PC-9 (cell line): ENCODE measurements at regions of chr1 and their contacts with region 1.

Region 1: DNA sequence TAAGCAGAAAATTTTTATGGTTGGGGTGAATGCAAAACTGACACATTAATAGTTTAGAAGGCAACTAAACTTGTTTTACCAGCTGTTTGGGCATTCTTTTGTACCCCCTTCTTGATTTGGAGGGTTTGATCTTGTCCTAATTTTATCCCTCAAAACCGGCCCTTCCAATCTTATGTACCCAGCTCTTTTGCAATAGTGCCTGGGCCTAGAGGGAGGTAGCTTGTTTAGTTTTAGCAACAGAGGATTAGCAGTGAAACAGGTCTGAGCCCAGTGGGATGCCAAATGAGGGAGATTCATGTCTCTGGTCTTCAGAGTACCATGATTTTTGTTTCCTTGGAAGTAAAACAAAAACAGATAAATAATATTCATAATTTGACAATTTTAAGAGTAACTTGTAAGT is 45.1 kb downstream of the CRP start:
- DNase-seq: no peak
- H3K4me3 ChIP-seq: no peak overlapping the region
- H3K27ac ChIP-seq: no peak overlapping the region
- H3K4me1 ChIP-seq: no peaks in the 10 kb centered on the region
- H3K27me3 ChIP-seq: no peaks in the 10 kb centered on the region
- CTCF ChIP-seq: no peak

Region 2: DNA sequence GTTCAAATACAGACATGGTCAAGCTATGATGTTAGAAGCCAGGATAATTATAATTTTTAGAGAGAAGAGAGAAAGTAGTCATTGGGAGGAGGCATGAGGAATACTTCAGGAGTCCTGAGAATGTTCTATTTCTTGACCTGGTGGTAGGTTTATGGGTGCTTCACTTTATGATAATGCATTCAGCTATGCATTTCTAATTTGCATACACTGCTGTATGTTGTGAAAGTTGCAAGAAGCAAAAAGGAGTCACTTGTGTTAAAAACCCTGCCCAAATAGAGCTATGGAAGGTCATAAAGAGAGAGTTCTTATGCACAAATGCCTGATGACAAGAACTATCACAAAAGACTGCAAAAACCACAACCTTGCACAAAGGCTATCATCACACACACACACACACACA is 36.4 kb before region 1 on chr1:
- CTCF ChIA-PET with region 1: no interaction called
- POLR2A ChIA-PET with region 1: no interaction called
- intact Hi-C with region 1: no loop called
- DNase-seq: no peak
- H3K4me3 ChIP-seq: no peak overlapping the region
- H3K27ac ChIP-seq: no peak overlapping the region
- H3K4me1 ChIP-seq: no peaks in the 10 kb centered on the region
- H3K27me3 ChIP-seq: no peaks in the 10 kb centered on the region
- CTCF ChIP-seq: no peak

Region 3: DNA sequence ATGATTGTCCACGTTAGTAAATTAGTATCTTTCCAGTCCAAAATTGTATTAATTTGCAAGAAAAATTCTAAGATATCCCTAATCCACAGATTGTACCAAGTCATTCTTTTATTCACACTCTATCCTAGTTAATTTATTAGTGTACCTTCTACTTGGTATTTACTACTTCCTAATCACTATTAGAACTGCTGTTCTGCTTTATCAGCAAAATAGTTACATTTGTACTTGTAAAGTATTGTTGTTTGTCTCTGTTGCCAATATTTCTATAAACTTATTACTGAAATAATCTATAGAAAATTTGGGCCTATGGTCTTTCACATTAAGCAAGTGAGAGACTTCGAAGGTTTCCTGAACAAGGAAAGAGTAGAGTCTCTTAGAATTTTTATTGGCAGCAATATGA is 50.7 kb after region 1 on chr1:
- CTCF ChIA-PET with region 1: no interaction called
- POLR2A ChIA-PET with region 1: no interaction called
- intact Hi-C with region 1: loop called (anchors 2 kb)
- DNase-seq: no peak
- H3K4me3 ChIP-seq: no peak overlapping the region
- H3K27ac ChIP-seq: no peak overlapping the region
- H3K4me1 ChIP-seq: no peaks in the 10 kb centered on the region
- H3K27me3 ChIP-seq: no peaks in the 10 kb centered on the region
- CTCF ChIP-seq: no peak